Prostate gland (tissue), 2 donors: ENCODE measurements at regions of chr17 and their contacts with region 1.

Region 1: DNA sequence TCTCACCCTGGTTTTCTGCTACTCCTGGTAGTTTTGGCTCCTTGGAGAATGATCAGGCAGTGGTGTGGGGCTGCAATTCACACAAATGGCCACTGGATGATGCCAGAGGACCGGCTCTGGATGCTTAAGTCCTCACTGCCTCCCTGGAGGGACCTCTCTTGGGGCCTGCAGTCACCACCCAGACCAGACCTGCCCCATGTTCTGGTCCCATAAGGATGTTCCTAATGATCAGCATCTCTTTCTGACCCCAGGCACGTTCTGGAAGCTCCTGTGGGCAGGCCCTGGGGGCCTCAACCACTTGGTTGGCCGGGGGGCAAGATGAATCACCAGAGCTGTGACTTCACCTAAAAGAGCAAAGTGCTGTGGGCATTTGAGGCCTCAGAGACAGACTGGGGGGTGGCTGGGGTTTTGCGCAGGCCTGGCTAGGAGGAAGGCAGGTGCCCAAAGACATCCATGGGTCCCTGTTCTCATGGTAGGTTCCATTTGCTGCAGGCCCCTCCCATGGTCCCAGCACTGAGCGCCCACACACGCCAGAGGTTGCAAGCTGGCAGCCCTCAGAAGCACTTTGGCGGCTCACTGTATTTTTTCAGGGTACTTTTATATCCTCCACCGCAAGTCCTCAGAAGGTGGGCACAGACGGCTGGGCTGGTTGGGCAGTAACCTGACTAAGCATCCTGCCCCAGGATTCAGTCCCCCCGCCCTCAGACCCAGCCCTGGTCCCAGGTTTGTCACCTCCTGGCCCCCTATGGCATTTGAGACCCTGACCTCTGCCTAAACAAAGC is 53.2 kb downstream of the NT5M start:
- DNase-seq: peak; percentile 76
- H3K4me3 ChIP-seq: no peak overlapping the region
- H3K27ac ChIP-seq: no peak overlapping the region
- H3K4me1 ChIP-seq: no peaks in the 10 kb centered on the region
- H3K27me3 ChIP-seq: no peaks in the 10 kb centered on the region
- CTCF ChIP-seq: peak; percentile 94 to 100 (median 98)
- POLR2A ChIP-seq: no peak

Region 2: GRCh38 chr17:17440010-17440843 is 83.9 kb after region 1 on chr17:
- intact Hi-C with region 1: no loop called
- DNase-seq: no peak
- H3K4me3 ChIP-seq: no peak overlapping the region
- H3K27ac ChIP-seq: no peak overlapping the region
- H3K4me1 ChIP-seq: no peaks in the 10 kb centered on the region
- H3K27me3 ChIP-seq: no peaks in the 10 kb centered on the region
- CTCF ChIP-seq: peak in 3 of 4 experiments; percentile 32 to 42 (median 36)
- POLR2A ChIP-seq: no peak

Region 3: GRCh38 chr17:17551361-17551760 is 195.0 kb after region 1 on chr17:
- intact Hi-C with region 1: no loop called
- DNase-seq: no peak
- H3K4me3 ChIP-seq: no peak overlapping the region
- H3K27ac ChIP-seq: no peak overlapping the region
- H3K4me1 ChIP-seq: no peaks in the 10 kb centered on the region
- H3K27me3 ChIP-seq: no peaks in the 10 kb centered on the region
- CTCF ChIP-seq: no peak
- POLR2A ChIP-seq: no peak

Region 4: DNA sequence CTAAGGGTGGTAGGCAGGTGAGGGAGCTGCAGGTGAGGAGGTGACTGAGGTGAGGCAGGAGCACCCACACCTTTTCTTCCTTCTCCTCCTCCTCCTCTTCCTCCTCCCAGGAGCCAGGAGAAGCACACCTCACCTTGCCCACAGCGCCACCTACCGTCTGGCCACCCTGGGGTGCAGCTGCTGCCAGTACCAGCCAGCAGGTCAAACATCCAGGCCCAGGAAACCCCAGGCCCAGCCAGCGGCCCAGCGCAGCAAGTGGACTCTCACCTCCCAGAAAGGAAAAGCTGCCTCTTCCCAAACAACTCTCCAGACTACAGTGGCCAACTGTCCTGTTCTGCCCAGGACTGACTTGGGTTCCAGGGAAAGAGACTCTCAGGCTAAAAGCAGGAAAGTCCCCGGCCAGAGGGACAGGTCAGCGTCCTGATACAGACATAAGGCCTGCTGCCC is 212.4 kb after region 1 on chr17:
- intact Hi-C with region 1: loop called (anchors 5 kb)
- DNase-seq: peak; percentile 76
- H3K4me3 ChIP-seq: no peak overlapping the region
- H3K27ac ChIP-seq: peak overlapping the region; percentile 68 to 82
- H3K4me1 ChIP-seq: peaks cover 24% of the 10 kb centered on the region
- H3K27me3 ChIP-seq: no peaks in the 10 kb centered on the region
- CTCF ChIP-seq: peak; percentile 69 to 91 (median 83)
- POLR2A ChIP-seq: no peak

Region 5: GRCh38 chr17:17641621-17642409 is 285.5 kb after region 1 on chr17:
- intact Hi-C with region 1: loop called (anchors 1 kb)
- DNase-seq: peak; percentile 70
- H3K4me3 ChIP-seq: no peak overlapping the region
- H3K27ac ChIP-seq: no peak overlapping the region
- H3K4me1 ChIP-seq: no peaks in the 10 kb centered on the region
- H3K27me3 ChIP-seq: no peaks in the 10 kb centered on the region
- CTCF ChIP-seq: peak; percentile 83 to 95 (median 92)
- POLR2A ChIP-seq: no peak

Region 6: GRCh38 chr17:17766077-17766743 is 409.9 kb after region 1 on chr17:
- intact Hi-C with region 1: no loop called
- DNase-seq: no peak
- H3K4me3 ChIP-seq: no peak overlapping the region
- H3K27ac ChIP-seq: peak overlapping the region in 1 of 2 donors; percentile 20
- H3K4me1 ChIP-seq: peaks cover 20% of the 10 kb centered on the region
- H3K27me3 ChIP-seq: no peaks in the 10 kb centered on the region
- CTCF ChIP-seq: no peak
- POLR2A ChIP-seq: no peak